GM12878 (cell line): ENCODE measurements at regions of chr7 and their contacts with region 1.

Region 1: DNA sequence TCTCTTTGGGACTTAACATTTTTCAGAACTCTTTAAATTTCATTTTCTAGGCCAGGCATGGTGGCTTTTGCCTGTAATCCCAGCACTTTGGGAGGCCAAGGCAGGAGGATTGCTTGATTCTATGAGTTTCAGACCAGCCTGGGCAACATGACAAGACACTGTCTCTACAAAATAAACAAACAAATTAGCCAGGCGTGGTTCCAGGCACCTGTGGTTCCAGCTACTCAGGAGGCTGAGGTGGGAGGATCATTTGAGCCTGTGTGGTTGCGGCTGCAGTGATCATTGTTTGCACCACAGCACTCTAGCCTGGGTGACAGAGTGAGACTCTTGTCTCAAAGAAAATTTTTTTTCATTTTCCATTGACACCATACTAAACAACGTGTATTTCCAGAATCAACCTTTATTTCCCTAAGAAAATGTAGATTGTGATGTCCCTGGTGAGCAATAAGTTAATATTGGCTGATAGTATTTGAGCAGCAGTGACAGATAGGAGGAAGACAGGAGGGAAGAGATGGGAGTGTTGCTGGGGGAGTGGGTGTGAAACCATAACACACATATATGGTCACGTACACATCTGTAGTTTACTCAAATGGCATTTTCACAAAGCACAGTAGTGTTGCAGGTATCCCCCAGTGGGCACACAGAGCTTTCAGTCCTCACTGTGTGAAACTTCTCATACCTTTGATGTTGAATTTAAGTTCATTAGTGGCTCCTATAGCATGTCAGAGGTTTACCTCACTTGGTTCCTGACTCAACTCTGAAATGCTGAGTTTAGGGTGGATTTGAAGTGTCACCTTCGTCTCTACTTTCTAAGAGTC is 205.6 kb downstream of the AUTS2 start:
- DNase-seq: peak; percentile 100
- ATAC-seq: peak; percentile 82
- H3K4me3 ChIP-seq: peak overlapping the region; percentile 52; the same call in 1 of the 2 replicates
- H3K27ac ChIP-seq: peak overlapping the region; percentile 97
- H3K4me1 ChIP-seq: peaks cover 55% of the 10 kb centered on the region
- H3K27me3 ChIP-seq: no peaks in the 10 kb centered on the region
- CTCF ChIP-seq: no peak
- EP300 ChIP-seq: peak; percentile 95 to 97
- POLR2A ChIP-seq: no peak
- RAD21 ChIP-seq: no peak; the same call in 1 of the 2 replicates

Region 2: GRCh38 chr7:69539531-69539930 is 264.4 kb before region 1 on chr7:
- CTCF ChIA-PET with region 1: no interaction called
- POLR2A ChIA-PET with region 1: no interaction called
- RAD21 ChIA-PET with region 1: no interaction called
- SMC1A ChIA-PET with region 1: no interaction called
- in situ Hi-C with region 1: no loop called
- intact Hi-C with region 1: no loop called
- DNase-seq: no peak
- ATAC-seq: no peak
- H3K4me3 ChIP-seq: no peak overlapping the region
- H3K27ac ChIP-seq: no peak overlapping the region
- H3K4me1 ChIP-seq: no peaks in the 10 kb centered on the region
- H3K27me3 ChIP-seq: no peaks in the 10 kb centered on the region; a peak in 1 of 4 replicates
- CTCF ChIP-seq: no peak
- EP300 ChIP-seq: no peak
- POLR2A ChIP-seq: no peak
- RAD21 ChIP-seq: no peak

Region 3: DNA sequence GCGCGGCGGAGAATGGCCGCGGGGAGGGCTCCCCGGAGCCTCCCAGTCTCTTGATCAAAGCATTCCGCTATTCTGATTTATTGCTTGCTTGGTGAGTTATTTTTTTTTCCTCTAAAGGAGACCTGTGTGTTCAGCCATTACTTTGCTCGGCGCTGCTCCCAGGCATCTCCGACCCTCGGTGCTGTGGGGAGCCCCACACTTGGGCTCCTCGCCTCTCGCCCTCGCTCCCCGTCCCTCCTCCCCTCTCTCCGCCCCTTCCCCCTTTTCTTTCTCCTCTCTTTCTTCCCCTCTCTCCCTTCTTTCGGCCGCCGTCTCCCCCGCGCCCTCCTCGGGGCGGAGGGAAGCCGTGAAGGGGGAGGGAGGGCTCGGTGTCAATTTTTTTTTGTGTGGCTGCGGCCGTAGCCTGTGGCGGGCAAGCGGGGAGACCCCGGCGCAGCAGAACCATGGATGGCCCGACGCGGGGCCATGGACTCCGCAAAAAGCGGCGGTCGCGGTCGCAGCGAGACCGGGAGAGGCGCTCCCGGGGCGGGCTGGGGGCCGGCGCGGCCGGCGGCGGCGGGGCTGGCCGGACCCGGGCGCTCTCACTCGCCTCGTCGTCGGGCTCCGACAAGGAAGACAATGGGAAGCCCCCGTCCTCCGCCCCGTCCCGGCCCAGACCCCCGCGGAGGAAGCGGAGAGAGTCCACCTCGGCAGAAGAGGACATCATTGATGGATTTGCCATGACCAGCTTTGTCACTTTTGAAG is 204.5 kb before region 1 on chr7:
- CTCF ChIA-PET with region 1: no interaction called
- POLR2A ChIA-PET with region 1: interaction called, 3 read pairs
- RAD21 ChIA-PET with region 1: interaction called, 19 read pairs
- SMC1A ChIA-PET with region 1: interaction called, 4 read pairs
- in situ Hi-C with region 1: no loop called
- intact Hi-C with region 1: loop called (anchors 1 kb)
- DNase-seq: no peak
- ATAC-seq: peak; percentile 1; the same call in 1 of the 3 replicates
- H3K4me3 ChIP-seq: peak overlapping the region; percentile 97
- H3K27ac ChIP-seq: peak overlapping the region; percentile 29; the same call in 1 of the 2 replicates
- H3K4me1 ChIP-seq: peaks cover 18% of the 10 kb centered on the region
- H3K27me3 ChIP-seq: no peaks in the 10 kb centered on the region; a peak in 1 of 4 replicates
- CTCF ChIP-seq: no peak
- EP300 ChIP-seq: no peak
- POLR2A ChIP-seq: no peak; the same call in 1 of the 2 replicates
- RAD21 ChIP-seq: no peak

Region 4: DNA sequence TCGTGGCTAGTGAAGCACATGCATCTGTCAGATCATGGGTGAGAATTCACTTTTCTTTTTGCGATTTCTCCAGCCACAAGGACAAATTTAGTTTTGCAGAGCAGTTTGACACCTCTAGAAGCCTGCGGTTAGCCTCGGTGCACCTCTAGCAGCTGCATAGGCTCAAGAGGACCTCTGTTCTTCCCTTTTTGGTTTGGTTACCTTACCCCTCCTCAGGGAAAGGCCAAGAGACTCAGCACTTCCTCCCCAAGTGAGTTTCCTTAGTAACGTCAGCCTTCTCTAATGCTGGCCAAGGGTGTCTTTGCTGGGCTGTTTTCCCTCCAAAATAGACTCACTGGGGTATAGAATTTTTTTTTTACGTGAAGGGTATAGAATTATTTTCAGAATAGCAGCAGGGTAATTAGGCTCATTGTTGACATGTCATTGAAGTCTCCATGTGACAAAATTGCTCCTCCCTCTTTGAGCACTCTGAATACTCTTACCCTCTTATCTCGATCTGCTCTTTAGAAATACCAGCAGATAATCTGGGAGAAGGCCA is 107.8 kb before region 1 on chr7:
- CTCF ChIA-PET with region 1: interaction called, 5 read pairs
- POLR2A ChIA-PET with region 1: interaction called, 3 read pairs
- RAD21 ChIA-PET with region 1: interaction called, 8 read pairs
- SMC1A ChIA-PET with region 1: interaction called, 13 read pairs
- in situ Hi-C with region 1: no loop called
- intact Hi-C with region 1: loop called (anchors 1 kb)
- DNase-seq: peak; percentile 88
- ATAC-seq: peak; percentile 82
- H3K4me3 ChIP-seq: no peak overlapping the region; the same call in 1 of the 2 replicates
- H3K27ac ChIP-seq: peak overlapping the region; percentile 41
- H3K4me1 ChIP-seq: peaks cover 59% of the 10 kb centered on the region
- H3K27me3 ChIP-seq: no peaks in the 10 kb centered on the region
- CTCF ChIP-seq: no peak
- EP300 ChIP-seq: peak; percentile 91 to 97
- POLR2A ChIP-seq: no peak
- RAD21 ChIP-seq: peak; percentile 7; the same call in 1 of the 2 replicates

Region 5: DNA sequence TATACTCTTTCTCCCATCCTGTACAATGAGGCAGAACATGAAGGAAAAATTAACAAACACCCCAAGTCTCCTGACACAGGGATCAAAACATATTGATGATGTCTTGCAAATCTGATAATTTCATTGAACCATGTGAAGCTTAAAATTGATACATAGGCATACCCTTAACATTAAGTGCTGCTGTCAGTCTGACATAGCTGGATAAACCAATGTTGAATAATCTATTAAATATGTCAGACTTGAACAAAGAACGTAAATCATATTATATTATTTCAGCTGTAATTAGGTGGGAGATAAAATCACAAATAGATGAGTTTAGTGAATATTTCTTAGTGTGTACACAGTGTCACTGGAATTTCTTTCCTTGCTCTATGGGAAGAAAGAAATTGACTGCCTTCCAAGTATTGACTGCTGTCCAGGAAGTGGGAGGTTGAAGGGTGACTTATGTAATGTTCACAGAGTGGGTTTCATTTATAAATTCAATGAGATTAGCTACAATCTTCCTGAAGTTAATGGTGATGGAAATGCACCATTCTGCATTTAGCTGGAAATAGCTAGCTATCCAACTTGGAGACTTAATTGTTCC is 34.8 kb before region 1 on chr7:
- CTCF ChIA-PET with region 1: interaction called, 5 read pairs
- POLR2A ChIA-PET with region 1: interaction called, 4 read pairs
- RAD21 ChIA-PET with region 1: interaction called, 6 read pairs
- SMC1A ChIA-PET with region 1: interaction called, 14 read pairs
- in situ Hi-C with region 1: no loop called
- intact Hi-C with region 1: loop called (anchors 1 kb)
- DNase-seq: no peak
- ATAC-seq: no peak
- H3K4me3 ChIP-seq: no peak overlapping the region
- H3K27ac ChIP-seq: no peak overlapping the region
- H3K4me1 ChIP-seq: peaks cover 16% of the 10 kb centered on the region
- H3K27me3 ChIP-seq: no peaks in the 10 kb centered on the region
- CTCF ChIP-seq: no peak
- EP300 ChIP-seq: no peak
- POLR2A ChIP-seq: no peak
- RAD21 ChIP-seq: no peak

Region 6: DNA sequence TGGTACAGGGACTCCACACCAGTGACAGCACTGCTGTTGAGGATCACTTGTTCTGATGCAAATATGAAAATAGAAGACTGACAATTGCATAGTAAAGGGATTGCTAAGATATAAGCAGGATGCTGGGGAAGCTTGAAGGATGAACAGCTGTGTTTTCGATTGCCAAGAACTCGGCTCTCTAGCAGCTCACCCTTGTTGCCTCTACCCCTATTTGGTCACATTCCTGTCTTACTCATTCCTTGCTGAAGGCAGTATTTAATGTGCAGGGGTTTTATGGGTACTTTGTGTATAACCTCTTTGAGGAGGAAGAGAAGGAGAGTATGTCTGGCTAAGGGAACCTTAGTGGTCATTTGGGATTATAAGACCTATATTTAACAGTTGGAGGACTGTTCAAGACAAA is 13.2 kb after region 1 on chr7:
- CTCF ChIA-PET with region 1: interaction called, 31 read pairs
- POLR2A ChIA-PET with region 1: interaction called, 10 read pairs
- RAD21 ChIA-PET with region 1: interaction called, 141 read pairs
- SMC1A ChIA-PET with region 1: interaction called, 202 read pairs
- in situ Hi-C with region 1: no loop called
- intact Hi-C with region 1: no loop called
- DNase-seq: no peak
- ATAC-seq: no peak
- H3K4me3 ChIP-seq: no peak overlapping the region
- H3K27ac ChIP-seq: no peak overlapping the region
- H3K4me1 ChIP-seq: peaks cover 1% of the 10 kb centered on the region
- H3K27me3 ChIP-seq: no peaks in the 10 kb centered on the region
- CTCF ChIP-seq: no peak
- EP300 ChIP-seq: no peak
- POLR2A ChIP-seq: no peak
- RAD21 ChIP-seq: no peak

Region 7: GRCh38 chr7:69882269-69882668 is 78.4 kb after region 1 on chr7:
- CTCF ChIA-PET with region 1: no interaction called
- POLR2A ChIA-PET with region 1: interaction called, 16 read pairs
- RAD21 ChIA-PET with region 1: no interaction called
- SMC1A ChIA-PET with region 1: interaction called, 3 read pairs
- in situ Hi-C with region 1: no loop called
- intact Hi-C with region 1: no loop called
- DNase-seq: no peak
- ATAC-seq: peak; percentile 84
- H3K4me3 ChIP-seq: no peak overlapping the region
- H3K27ac ChIP-seq: peak overlapping the region; percentile 11; the same call in 1 of the 2 replicates
- H3K4me1 ChIP-seq: peaks cover 22% of the 10 kb centered on the region
- H3K27me3 ChIP-seq: no peaks in the 10 kb centered on the region
- CTCF ChIP-seq: no peak
- EP300 ChIP-seq: no peak
- POLR2A ChIP-seq: no peak
- RAD21 ChIP-seq: no peak

Region 8: DNA sequence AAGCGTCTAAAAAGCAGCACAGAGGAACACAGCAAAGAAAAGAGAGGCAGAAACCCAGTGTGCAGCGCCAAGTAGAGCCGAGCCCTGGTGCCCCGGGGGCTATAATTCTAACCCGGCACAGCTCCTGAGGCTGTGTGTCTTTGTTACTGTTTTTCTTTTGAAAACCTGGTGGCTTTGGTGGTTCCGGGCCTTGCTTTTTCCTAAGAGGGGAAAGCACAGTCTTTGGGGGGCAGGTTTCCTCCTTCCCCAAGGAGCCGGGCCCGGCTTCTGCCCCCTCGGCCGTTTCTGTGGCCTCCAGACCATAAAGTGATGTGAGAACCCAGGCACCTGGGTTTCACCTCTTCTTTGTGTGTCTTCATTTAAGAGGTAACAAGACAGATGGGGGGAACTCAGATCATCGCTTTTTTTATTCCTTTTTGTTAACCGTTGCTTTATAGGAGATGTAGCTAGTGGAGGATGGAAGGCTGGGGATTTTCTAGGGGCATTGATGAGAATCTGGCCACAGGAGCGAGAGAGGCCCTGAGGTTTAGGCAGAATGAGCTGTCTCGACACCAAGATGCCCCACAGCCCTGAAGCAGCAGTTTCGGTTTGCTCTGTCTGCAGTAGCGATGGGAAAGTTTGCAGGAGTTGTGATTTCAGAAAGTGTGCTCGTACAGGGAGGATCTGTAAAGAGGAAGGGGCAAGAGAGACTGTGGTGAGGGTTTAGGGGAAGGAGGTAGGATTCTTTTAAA is 960.2 kb after region 1 on chr7:
- CTCF ChIA-PET with region 1: no interaction called
- POLR2A ChIA-PET with region 1: no interaction called
- RAD21 ChIA-PET with region 1: no interaction called
- SMC1A ChIA-PET with region 1: no interaction called
- in situ Hi-C with region 1: no loop called
- intact Hi-C with region 1: loop called (anchors 10 kb)
- DNase-seq: peak; percentile 98
- ATAC-seq: peak; percentile 88
- H3K4me3 ChIP-seq: peak overlapping the region; percentile 54
- H3K27ac ChIP-seq: peak overlapping the region; percentile 98
- H3K4me1 ChIP-seq: peaks cover 43% of the 10 kb centered on the region
- H3K27me3 ChIP-seq: no peaks in the 10 kb centered on the region
- CTCF ChIP-seq: no peak
- EP300 ChIP-seq: peak in 1 of 2 experiments; percentile 72
- POLR2A ChIP-seq: peak; percentile 27; the same call in 1 of the 2 replicates
- RAD21 ChIP-seq: 0 out of 2 replicates have a peak, but pooled peaks have one; percentile 16